CD4-positive, alpha-beta memory T cell (primary cell): ENCODE measurements at regions of chr7 and their contacts with region 1.

Region 1: GRCh38 chr7:114922016-114922651 is at the start of gene MDFIC:
- DNase-seq: peak; percentile 59 to 75 (median 63)
- H3K4me3 ChIP-seq: peak within 1 kb of the TSS; percentile 59 to 93
- H3K4me3 Mint-ChIP-seq: peak within 1 kb of the TSS; percentile 95 to 99 (median 98)
- H3K27ac ChIP-seq: peak within 1 kb of the TSS; percentile 90
- H3K27ac Mint-ChIP-seq: peak within 1 kb of the TSS; percentile 91 to 99 (median 96)
- H3K4me1 ChIP-seq: peaks cover 53% of the 10 kb centered on the region
- H3K4me1 Mint-ChIP-seq: peaks cover 43 to 75% (median 52%) of the 10 kb centered on the region in 4 donors
- H3K27me3 ChIP-seq: no peaks in the 10 kb centered on the region
- H3K27me3 Mint-ChIP-seq: peaks cover 0 to 1% of the 10 kb centered on the region in 2 donors
- total RNA-seq, gene MDFIC: 68.1 to 78.0 TPM

Region 2: GRCh38 chr7:114939484-114940097 is 17.5 kb after region 1 on chr7:
- CTCF ChIA-PET with region 1: interaction called, 23 read pairs
- POLR2A ChIA-PET with region 1: interaction called, 74 read pairs
- intact Hi-C with region 1: loop called (anchors 2 kb)
- DNase-seq: peak in 1 of 5 donors; percentile 56
- H3K4me3 ChIP-seq: no peak overlapping the region
- H3K4me3 Mint-ChIP-seq: peak overlapping the region in 4 of 8 donors; percentile 32 to 61 (median 48)
- H3K27ac ChIP-seq: no peak overlapping the region
- H3K27ac Mint-ChIP-seq: peak overlapping the region in 2 of 7 donors; percentile 18 to 55
- H3K4me1 ChIP-seq: peaks cover 84% of the 10 kb centered on the region
- H3K4me1 Mint-ChIP-seq: peaks cover 60 to 80% (median 64%) of the 10 kb centered on the region in 4 donors
- H3K27me3 ChIP-seq: no peaks in the 10 kb centered on the region
- H3K27me3 Mint-ChIP-seq: no peaks in the 10 kb centered on the region

Region 3: DNA sequence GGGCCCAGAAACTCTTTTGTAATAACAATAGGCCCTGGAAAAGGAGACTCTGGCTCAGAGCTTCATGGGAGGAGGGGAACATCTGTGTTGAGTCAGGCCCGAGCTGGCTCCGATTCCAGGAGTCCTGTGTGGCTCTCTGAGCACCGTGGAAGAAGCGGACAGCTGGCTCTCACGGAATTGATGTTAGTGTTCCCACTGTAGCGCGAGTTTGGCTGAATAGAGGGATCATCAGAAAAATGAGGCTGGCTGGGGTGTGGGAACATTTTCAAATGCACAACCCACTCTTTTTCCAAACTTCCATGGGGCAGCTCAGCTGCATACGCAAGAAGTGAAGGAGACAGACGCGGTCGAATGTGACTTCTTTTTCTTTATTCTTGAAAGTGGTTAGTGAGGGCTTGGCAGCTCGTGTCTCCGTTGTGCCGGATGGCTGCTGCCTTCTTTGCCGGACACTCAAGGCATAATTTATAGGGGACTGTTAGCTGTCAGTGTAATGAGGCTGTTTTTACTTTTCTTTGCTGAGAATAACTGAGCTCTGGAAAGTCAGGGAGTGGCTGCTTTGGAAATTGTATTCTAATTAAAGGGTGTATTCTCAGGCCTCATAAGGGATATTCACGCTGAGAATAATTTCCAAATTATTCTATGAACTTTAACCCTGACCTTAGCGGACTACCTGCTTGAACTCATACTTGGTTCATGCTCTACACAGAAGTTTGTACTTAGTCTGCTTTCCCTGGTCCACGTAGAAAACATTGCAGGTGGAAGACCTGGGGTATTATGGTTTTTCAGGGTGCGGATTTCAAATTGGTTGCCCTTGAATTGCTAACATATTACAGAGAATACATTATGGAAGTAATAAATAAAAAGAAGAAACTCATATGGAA is 22.9 kb after region 1 on chr7:
- CTCF ChIA-PET with region 1: interaction called, 23 read pairs
- POLR2A ChIA-PET with region 1: interaction called, 13 read pairs
- intact Hi-C with region 1: no loop called
- DNase-seq: no peak
- H3K4me3 ChIP-seq: no peak overlapping the region
- H3K4me3 Mint-ChIP-seq: peak overlapping the region in 1 of 8 donors; percentile 27
- H3K27ac ChIP-seq: no peak overlapping the region
- H3K27ac Mint-ChIP-seq: peak overlapping the region in 5 of 7 donors; percentile 16 to 83 (median 36)
- H3K4me1 ChIP-seq: peaks cover 75% of the 10 kb centered on the region
- H3K4me1 Mint-ChIP-seq: peaks cover 72 to 94% (median 83%) of the 10 kb centered on the region in 4 donors
- H3K27me3 ChIP-seq: no peaks in the 10 kb centered on the region
- H3K27me3 Mint-ChIP-seq: no peaks in the 10 kb centered on the region

Region 4: DNA sequence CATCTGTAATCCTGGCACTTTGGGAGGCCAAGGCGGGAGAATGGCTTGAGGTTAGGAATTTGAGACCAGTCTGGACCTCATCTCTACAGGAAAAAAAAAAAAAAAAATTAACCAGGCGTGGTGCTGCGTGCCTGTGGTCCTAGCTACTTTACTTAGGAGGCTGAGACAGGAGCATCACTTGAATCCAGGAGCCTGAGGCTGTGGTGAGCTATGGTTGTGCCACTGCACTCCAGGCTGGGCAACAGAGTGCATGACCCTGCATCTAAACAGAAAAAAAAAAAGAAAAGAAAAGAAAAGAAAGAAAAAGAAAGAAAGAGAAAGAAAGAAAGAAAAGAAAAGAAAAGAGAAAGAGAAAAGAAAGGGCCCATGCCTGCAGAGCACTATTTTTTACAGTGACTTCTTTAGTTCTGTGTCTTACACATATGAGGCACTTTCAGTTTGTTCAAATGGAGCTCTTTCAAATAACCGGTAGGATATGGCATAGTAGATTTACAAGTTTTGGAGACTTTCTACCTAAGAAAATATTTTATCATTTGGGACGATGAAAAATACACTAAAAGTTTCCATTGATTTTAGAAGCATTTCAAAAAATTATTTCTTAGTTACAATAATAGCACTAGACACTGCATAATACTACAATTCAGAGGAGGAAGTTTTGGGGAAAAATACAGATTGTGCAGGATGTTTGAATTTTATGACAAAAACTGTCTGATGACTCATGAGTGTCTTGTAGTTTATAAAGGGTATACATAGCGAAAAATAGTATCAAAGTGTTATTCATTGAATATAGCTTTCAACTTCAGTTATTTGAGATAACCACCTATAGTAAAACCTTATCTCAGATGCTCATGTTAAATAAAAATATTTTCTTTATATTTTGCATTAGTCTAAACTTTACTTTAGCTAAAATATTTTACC is 75.6 kb after region 1 on chr7:
- CTCF ChIA-PET with region 1: no interaction called
- POLR2A ChIA-PET with region 1: interaction called, 10 read pairs
- intact Hi-C with region 1: no loop called
- DNase-seq: no peak
- H3K4me3 ChIP-seq: no peak overlapping the region
- H3K4me3 Mint-ChIP-seq: peak overlapping the region in 7 of 8 donors; percentile 48 to 83 (median 72)
- H3K27ac ChIP-seq: no peak overlapping the region
- H3K27ac Mint-ChIP-seq: peak overlapping the region; percentile 57 to 86 (median 71)
- H3K4me1 ChIP-seq: peaks cover 62% of the 10 kb centered on the region
- H3K4me1 Mint-ChIP-seq: peaks cover 61 to 86% (median 72%) of the 10 kb centered on the region in 4 donors
- H3K27me3 ChIP-seq: no peaks in the 10 kb centered on the region
- H3K27me3 Mint-ChIP-seq: no peaks in the 10 kb centered on the region

Region 5: GRCh38 chr7:115008465-115009114 is 86.5 kb after region 1 on chr7:
- CTCF ChIA-PET with region 1: interaction called, 4 read pairs
- POLR2A ChIA-PET with region 1: interaction called, 29 read pairs
- intact Hi-C with region 1: loop called (anchors 2 kb)
- DNase-seq: peak in 2 of 5 donors; percentile 20 to 41
- H3K4me3 ChIP-seq: peak overlapping the region; percentile 17 to 25
- H3K4me3 Mint-ChIP-seq: peak overlapping the region; percentile 45 to 92 (median 80)
- H3K27ac ChIP-seq: peak overlapping the region; percentile 55
- H3K27ac Mint-ChIP-seq: peak overlapping the region; percentile 86 to 96 (median 93)
- H3K4me1 ChIP-seq: peaks cover 89% of the 10 kb centered on the region
- H3K4me1 Mint-ChIP-seq: peaks cover 74 to 95% (median 80%) of the 10 kb centered on the region in 4 donors
- H3K27me3 ChIP-seq: no peaks in the 10 kb centered on the region
- H3K27me3 Mint-ChIP-seq: no peaks in the 10 kb centered on the region

Region 6: GRCh38 chr7:115217373-115217772 is 295.2 kb after region 1 on chr7:
- CTCF ChIA-PET with region 1: interaction called, 9 read pairs
- POLR2A ChIA-PET with region 1: interaction called, 4 read pairs
- intact Hi-C with region 1: loop called (anchors 5 kb)
- DNase-seq: peak in 4 of 5 donors; percentile 22 to 29 (median 26)
- H3K4me3 ChIP-seq: no peak overlapping the region
- H3K4me3 Mint-ChIP-seq: no peak overlapping the region
- H3K27ac ChIP-seq: no peak overlapping the region
- H3K27ac Mint-ChIP-seq: peak overlapping the region in 1 of 7 donors; percentile 10
- H3K4me1 ChIP-seq: peaks cover 15% of the 10 kb centered on the region
- H3K4me1 Mint-ChIP-seq: peaks cover 12 to 18% (median 14%) of the 10 kb centered on the region in 4 donors
- H3K27me3 ChIP-seq: no peaks in the 10 kb centered on the region
- H3K27me3 Mint-ChIP-seq: peaks cover 0 to 2% of the 10 kb centered on the region in 2 donors